Head of caudate nucleus (tissue), 42 donors: ENCODE measurements at regions of chr4 and their contacts with region 1.

Region 1: GRCh38 chr4:7192252-7193029 is at the start of gene SORCS2:
- DNase-seq: peak in 41 of 42 donors; percentile 49 to 91 (median 81)

Region 2: DNA sequence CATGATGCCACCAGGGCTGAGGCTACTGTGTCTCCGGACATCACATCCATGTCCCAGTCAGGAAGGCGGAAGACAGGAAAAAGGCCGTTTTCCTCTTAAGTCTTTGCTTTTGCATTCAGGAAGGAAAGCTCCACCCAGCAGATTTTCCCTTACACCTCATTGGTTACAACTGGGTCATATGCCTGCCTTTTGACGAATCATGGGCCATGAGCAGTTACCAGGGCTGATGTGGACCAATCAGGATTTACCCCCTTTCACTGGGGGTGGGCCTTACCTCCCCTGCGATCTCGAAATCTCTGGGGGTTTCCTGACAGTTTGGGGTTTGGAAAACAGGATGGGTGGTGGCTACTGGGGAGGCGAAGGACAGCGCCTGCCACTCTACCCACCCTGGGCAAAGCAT is 72.1 kb before region 1 on chr4:
- intact Hi-C with region 1: no loop called
- DNase-seq: no peak

Region 3: GRCh38 chr4:7295911-7296660 is 103.6 kb after region 1 on chr4:
- intact Hi-C with region 1: loop called (anchors 2 kb)
- DNase-seq: peak; percentile 50 to 88 (median 74)

Region 4: DNA sequence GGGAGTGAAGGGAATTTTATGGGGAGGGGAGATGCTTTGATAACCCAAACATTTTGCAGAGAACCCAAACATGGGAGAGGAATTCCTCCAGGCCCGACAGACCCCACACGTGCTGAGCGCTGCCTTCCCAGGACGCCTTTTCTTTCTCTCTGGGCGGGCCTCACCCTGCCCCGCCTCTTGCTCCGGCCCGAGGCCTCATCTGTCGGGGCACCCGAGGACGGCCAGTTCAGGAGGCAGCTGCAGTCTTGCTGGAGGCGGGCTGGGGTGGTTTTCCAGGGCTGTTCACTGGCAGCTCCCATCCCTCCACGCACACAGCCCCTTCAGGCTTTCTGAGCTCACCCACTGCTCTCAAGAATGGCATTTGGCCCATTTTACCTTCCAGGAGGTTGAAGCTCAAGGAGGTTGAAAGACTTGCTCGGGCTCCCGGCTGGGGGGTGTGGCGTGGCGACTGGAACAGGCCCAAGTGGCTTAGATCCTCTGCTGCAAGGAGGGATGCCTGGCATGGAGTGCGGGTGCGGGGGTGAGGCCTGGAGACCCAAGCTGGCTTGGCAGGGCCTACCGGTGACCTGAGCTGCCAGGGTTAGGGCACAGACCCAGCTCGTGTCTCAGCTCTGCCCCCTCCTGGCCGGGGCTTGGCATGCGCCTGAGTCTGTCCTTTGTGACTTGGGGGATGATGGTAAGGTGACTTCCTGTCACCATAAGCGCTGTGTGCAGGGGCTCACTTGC is 143.1 kb after region 1 on chr4:
- intact Hi-C with region 1: loop called (anchors 5 kb)
- DNase-seq: peak; percentile 47 to 89 (median 77)

Region 5: GRCh38 chr4:7462509-7462971 is 270.1 kb after region 1 on chr4:
- intact Hi-C with region 1: loop called (anchors 2 kb)
- DNase-seq: peak in 37 of 42 donors; percentile 29 to 78 (median 60)

Region 6: GRCh38 chr4:7719354-7720174 is 527.1 kb after region 1 on chr4:
- intact Hi-C with region 1: loop called (anchors 2 kb)
- DNase-seq: peak; percentile 38 to 90 (median 78)

Region 7: DNA sequence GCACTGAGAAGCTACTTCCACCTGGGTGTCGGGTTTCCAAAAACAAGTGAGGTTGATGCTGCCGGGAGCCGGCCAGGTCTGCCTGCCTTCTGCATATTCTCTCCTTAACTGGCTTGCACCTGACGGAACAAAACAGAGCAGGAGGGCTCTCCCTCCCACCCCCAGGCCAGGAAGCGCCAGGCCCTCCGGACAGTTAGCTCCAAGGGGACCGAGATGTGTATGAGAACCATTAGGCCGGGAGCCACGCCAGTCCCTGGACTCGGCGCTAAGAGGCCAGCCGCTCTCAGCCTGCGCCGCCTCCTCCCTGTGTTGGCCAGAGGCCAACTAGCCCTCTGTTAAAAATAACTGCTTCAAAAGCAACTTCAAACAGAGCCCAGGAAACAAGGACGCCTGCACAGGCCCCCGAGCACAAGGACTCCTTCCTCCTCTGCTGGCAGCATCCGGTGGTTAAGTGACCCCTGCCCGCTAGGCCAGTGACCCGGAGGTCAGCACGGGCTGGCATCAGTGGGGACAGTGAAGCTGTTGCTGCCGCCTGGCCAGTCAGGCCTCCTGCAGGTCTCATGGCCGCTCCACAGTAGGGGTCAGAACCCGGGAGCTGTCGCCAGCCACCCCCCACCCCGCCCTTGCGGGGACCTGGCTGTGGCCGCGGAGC is 858.2 kb after region 1 on chr4:
- intact Hi-C with region 1: no loop called
- DNase-seq: peak in 35 of 42 donors; percentile 31 to 77 (median 60)